Activated CD4-positive, alpha-beta memory T cell treated with anti-CD3 and anti-CD28 coated beads, Interleukin-2, amount 10 ng/mL, durations not matched to agents 7 days and 5 days (primary cell): ENCODE measurements at regions of chr17 and their contacts with region 1.

Region 1: DNA sequence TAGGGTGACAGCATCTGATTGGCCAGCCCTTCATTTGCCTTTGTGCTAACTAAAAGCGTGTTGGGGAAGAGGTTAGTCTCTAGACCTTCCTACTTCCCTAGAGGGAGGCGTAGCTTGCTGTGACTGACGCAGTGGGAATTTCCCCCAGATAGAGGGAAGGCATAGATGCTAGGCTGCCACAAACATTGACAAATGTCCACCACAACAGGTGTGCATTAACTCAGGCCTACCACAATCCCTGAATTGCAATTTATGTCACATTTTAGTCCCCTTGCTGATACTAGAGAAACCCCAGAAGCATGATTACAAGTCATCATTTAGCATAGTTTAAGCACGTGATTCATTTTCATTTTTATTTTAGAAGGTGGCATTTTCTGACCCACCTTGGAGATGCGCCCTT is 76.3 kb upstream of the WSB1 start:
- DNase-seq: no peak
- H3K4me3 Mint-ChIP-seq: no peak overlapping the region
- H3K27ac Mint-ChIP-seq: peak overlapping the region; percentile 75
- H3K4me1 Mint-ChIP-seq: peaks cover 29% of the 10 kb centered on the region
- H3K27me3 Mint-ChIP-seq: peaks cover 2% of the 10 kb centered on the region

Region 2: GRCh38 chr17:27181935-27182334 is 35.7 kb before region 1 on chr17:
- CTCF ChIA-PET with region 1: no interaction called
- POLR2A ChIA-PET with region 1: no interaction called
- DNase-seq: no peak
- H3K4me3 Mint-ChIP-seq: no peak overlapping the region
- H3K27ac Mint-ChIP-seq: no peak overlapping the region
- H3K4me1 Mint-ChIP-seq: peaks cover 7% of the 10 kb centered on the region
- H3K27me3 Mint-ChIP-seq: peaks cover 2% of the 10 kb centered on the region

Region 3: DNA sequence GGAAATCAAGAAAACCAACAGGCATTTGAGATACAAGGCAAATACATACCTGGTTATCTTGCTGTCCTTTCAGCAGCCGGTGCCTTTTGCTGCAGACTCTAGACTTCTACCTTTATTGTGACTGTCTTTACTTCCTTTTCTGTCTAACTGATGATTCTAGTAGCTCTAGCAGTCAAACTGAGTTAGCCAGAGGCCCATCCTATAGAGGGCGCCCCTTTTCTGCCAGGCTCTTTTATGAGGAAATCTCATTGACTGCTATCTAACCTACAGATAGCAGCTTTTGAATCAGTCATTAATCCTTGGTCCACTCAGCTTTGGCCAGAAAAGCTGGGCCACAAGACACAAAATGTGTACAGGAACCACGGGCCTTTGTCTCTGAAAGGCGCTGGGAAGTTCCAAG is 11.2 kb before region 1 on chr17:
- CTCF ChIA-PET with region 1: interaction called, 15 read pairs
- POLR2A ChIA-PET with region 1: interaction called, 8 read pairs
- DNase-seq: no peak
- H3K4me3 Mint-ChIP-seq: no peak overlapping the region
- H3K27ac Mint-ChIP-seq: no peak overlapping the region
- H3K4me1 Mint-ChIP-seq: peaks cover 9% of the 10 kb centered on the region
- H3K27me3 Mint-ChIP-seq: no peaks in the 10 kb centered on the region

Region 4: DNA sequence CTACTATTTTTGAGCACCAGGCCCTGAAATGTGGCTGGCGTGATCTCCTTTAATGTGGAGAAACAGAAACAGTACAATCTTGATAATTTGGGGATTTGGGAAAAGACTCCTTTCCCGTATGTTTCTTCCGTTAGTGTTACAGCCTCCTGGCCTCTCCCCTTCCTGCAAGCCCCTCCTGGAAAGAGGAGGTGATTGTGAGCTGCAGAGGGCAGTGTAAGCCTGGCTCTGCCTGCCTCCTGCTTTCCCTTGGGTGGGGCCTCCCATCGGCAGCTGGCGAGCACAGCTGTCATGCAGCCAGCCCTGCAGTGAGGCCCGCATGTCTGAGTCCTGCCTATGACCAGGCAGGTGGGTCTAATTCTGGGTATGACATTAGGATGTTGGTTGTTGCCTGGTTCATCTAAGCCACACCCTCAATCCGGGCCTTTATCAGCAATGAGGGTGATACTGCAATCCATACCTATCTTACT is 27.6 kb after region 1 on chr17:
- CTCF ChIA-PET with region 1: no interaction called
- POLR2A ChIA-PET with region 1: no interaction called
- DNase-seq: peak; percentile 46
- H3K4me3 Mint-ChIP-seq: no peak overlapping the region
- H3K27ac Mint-ChIP-seq: no peak overlapping the region
- H3K4me1 Mint-ChIP-seq: peaks cover 26% of the 10 kb centered on the region
- H3K27me3 Mint-ChIP-seq: peaks cover 16% of the 10 kb centered on the region